PC-9 (cell line): ENCODE measurements at regions of chr12 and their contacts with region 1.

Region 1: GRCh38 chr12:42023733-42024494 is 120.8 kb downstream of the GXYLT1 start:
- DNase-seq: peak; percentile 37 to 64
- H3K4me3 ChIP-seq: no peak overlapping the region
- H3K27ac ChIP-seq: no peak overlapping the region
- H3K4me1 ChIP-seq: no peaks in the 10 kb centered on the region
- H3K27me3 ChIP-seq: no peaks in the 10 kb centered on the region
- CTCF ChIP-seq: peak; percentile 87

Region 2: GRCh38 chr12:41264281-41264680 is 759.6 kb before region 1 on chr12:
- CTCF ChIA-PET with region 1: interaction called, 5 read pairs
- POLR2A ChIA-PET with region 1: no interaction called
- intact Hi-C with region 1: loop called (anchors 5 kb)
- DNase-seq: no peak
- H3K4me3 ChIP-seq: no peak overlapping the region
- H3K27ac ChIP-seq: no peak overlapping the region
- H3K4me1 ChIP-seq: no peaks in the 10 kb centered on the region
- H3K27me3 ChIP-seq: no peaks in the 10 kb centered on the region
- CTCF ChIP-seq: peak; percentile 64